ENCODE measurements at regions of chr19 and their contacts with region 1.

Region 1: DNA sequence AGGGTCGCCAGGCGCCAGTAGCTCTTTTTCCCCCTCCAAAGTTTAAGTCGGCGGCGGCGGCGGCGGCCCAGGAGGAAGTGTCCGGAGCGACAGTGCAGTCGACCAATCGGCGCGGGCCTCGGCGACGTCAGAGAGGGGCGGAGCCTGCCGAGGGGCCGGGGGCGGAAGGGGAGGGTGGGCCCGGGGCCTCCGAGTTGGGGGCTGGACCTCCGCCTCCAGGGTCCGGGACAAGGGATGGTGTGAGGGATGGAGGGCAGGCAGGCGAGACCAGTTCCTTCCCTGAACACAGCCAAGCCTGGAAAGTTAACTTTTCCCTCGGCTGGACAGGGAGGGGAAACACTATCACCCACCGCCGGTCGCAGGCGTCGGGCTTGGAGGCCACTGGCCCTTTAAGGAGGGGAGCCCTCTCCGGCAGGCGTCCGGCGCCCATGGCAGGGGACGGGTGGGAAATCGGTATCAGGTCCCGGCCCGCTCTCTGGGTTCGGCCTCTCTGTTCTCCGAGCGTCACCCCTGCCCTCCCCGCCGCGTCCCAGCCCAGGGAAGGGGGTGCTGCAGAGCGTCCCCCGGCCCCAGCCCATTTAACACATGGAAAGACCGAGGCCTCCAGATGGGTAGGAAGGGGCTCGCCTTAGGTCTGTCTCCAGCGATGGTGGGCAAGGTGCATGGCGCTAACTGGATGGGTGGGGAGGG is at the start of gene PRKD2:
- DNase-seq: peak; percentile 68 to 96 (median 80)
- ATAC-seq: peak; percentile 71
- H3K4me3 ChIP-seq: peak within 1 kb of the TSS; percentile 97
- H3K4me3 Mint-ChIP-seq: peak within 1 kb of the TSS; percentile 89 to 98 (median 95)
- H3K27ac ChIP-seq: peak within 1 kb of the TSS; percentile 98
- H3K27ac Mint-ChIP-seq: peak within 1 kb of the TSS; percentile 94 to 99 (median 97)
- H3K4me1 ChIP-seq: peaks cover 29% of the 10 kb centered on the region in 2 donors
- H3K4me1 Mint-ChIP-seq: peaks cover 30 to 57% (median 44%) of the 10 kb centered on the region in 7 donors
- H3K27me3 ChIP-seq: no peaks in the 10 kb centered on the region
- H3K27me3 Mint-ChIP-seq: no peaks in the 10 kb centered on the region
- total RNA-seq, gene PRKD2: 120 to 181 (median 123) TPM

Region 2: GRCh38 chr19:46614114-46614722 is 103.0 kb before region 1 on chr19:
- CTCF ChIA-PET with region 1: no interaction called
- POLR2A ChIA-PET with region 1: interaction called, 4 read pairs
- intact Hi-C with region 1: loop called in 1 of 2 experiments (anchors 5 kb)
- DNase-seq: peak in 8 of 9 donors; percentile 70 to 83 (median 77)
- ATAC-seq: peak; percentile 79
- H3K4me3 ChIP-seq: no peak overlapping the region
- H3K4me3 Mint-ChIP-seq: peak overlapping the region; percentile 40 to 77 (median 71)
- H3K27ac ChIP-seq: peak overlapping the region; percentile 65
- H3K27ac Mint-ChIP-seq: peak overlapping the region; percentile 79 to 93 (median 89)
- H3K4me1 ChIP-seq: peaks cover 24 to 84% of the 10 kb centered on the region in 2 donors
- H3K4me1 Mint-ChIP-seq: peaks cover 55 to 85% (median 77%) of the 10 kb centered on the region in 7 donors
- H3K27me3 ChIP-seq: no peaks in the 10 kb centered on the region
- H3K27me3 Mint-ChIP-seq: no peaks in the 10 kb centered on the region

Region 3: GRCh38 chr19:46624958-46625661 is 92.1 kb before region 1 on chr19 and contains the start of gene PTGIR:
- CTCF ChIA-PET with region 1: no interaction called
- POLR2A ChIA-PET with region 1: no interaction called
- intact Hi-C with region 1: no loop called
- DNase-seq: peak in 1 of 9 donors; percentile 64
- ATAC-seq: peak; percentile 49
- H3K4me3 ChIP-seq: peak within 1 kb of the TSS; percentile 35
- H3K4me3 Mint-ChIP-seq: peak within 1 kb of the TSS; percentile 71 to 96 (median 83)
- H3K27ac ChIP-seq: peak within 1 kb of the TSS; percentile 57
- H3K27ac Mint-ChIP-seq: peak within 1 kb of the TSS; percentile 56 to 95 (median 90)
- H3K4me1 ChIP-seq: peaks cover 0 to 48% of the 10 kb centered on the region in 2 donors
- H3K4me1 Mint-ChIP-seq: peaks cover 32 to 61% (median 51%) of the 10 kb centered on the region in 7 donors
- H3K27me3 ChIP-seq: no peaks in the 10 kb centered on the region
- H3K27me3 Mint-ChIP-seq: peaks cover 0 to 6% (median 0%) of the 10 kb centered on the region in 5 donors
- total RNA-seq, gene PTGIR: 4.2 to 99.1 (median 4.9) TPM

Region 4: GRCh38 chr19:46704379-46705076 is 12.7 kb before region 1 on chr19:
- CTCF ChIA-PET with region 1: interaction called, 22 read pairs
- POLR2A ChIA-PET with region 1: interaction called, 18 read pairs
- intact Hi-C with region 1: loop called (anchors 1 kb)
- DNase-seq: peak; percentile 69 to 93 (median 82)
- ATAC-seq: peak; percentile 98
- H3K4me3 ChIP-seq: no peak overlapping the region
- H3K4me3 Mint-ChIP-seq: peak overlapping the region in 1 of 10 donors; percentile 35
- H3K27ac ChIP-seq: no peak overlapping the region
- H3K27ac Mint-ChIP-seq: peak overlapping the region; percentile 16 to 90 (median 68)
- H3K4me1 ChIP-seq: peaks cover 0 to 4% of the 10 kb centered on the region in 2 donors
- H3K4me1 Mint-ChIP-seq: peaks cover 7 to 17% (median 12%) of the 10 kb centered on the region in 7 donors
- H3K27me3 ChIP-seq: no peaks in the 10 kb centered on the region
- H3K27me3 Mint-ChIP-seq: no peaks in the 10 kb centered on the region

Region 5: GRCh38 chr19:46746281-46747013 is 29.3 kb after region 1 on chr19 and contains the start of gene STRN4:
- CTCF ChIA-PET with region 1: interaction called, 4 read pairs
- POLR2A ChIA-PET with region 1: interaction called, 3 read pairs
- intact Hi-C with region 1: loop called (anchors 1 to 5 kb)
- DNase-seq: peak in 8 of 9 donors; percentile 29 to 65 (median 50)
- ATAC-seq: peak; percentile 87
- H3K4me3 ChIP-seq: peak within 1 kb of the TSS; percentile 73
- H3K4me3 Mint-ChIP-seq: peak within 1 kb of the TSS; percentile 84 to 97 (median 90)
- H3K27ac ChIP-seq: peak within 1 kb of the TSS; percentile 91
- H3K27ac Mint-ChIP-seq: peak within 1 kb of the TSS; percentile 74 to 94 (median 87)
- H3K4me1 ChIP-seq: peaks cover 21 to 26% of the 10 kb centered on the region in 2 donors
- H3K4me1 Mint-ChIP-seq: peaks cover 43 to 64% (median 58%) of the 10 kb centered on the region in 7 donors
- H3K27me3 ChIP-seq: no peaks in the 10 kb centered on the region
- H3K27me3 Mint-ChIP-seq: no peaks in the 10 kb centered on the region
- total RNA-seq, gene STRN4: 81.3 to 120 (median 90.4) TPM

Region 6: GRCh38 chr19:46850228-46851203 is 133.3 kb after region 1 on chr19 and contains the start of gene AP2S1:
- CTCF ChIA-PET with region 1: no interaction called
- POLR2A ChIA-PET with region 1: interaction called, 3 read pairs
- intact Hi-C with region 1: loop called in 1 of 2 experiments (anchors 1 kb)
- DNase-seq: peak; percentile 73 to 98 (median 93)
- ATAC-seq: peak; percentile 97
- H3K4me3 ChIP-seq: peak within 1 kb of the TSS; percentile 89
- H3K4me3 Mint-ChIP-seq: peak within 1 kb of the TSS; percentile 87 to 99 (median 93)
- H3K27ac ChIP-seq: peak within 1 kb of the TSS; percentile 79
- H3K27ac Mint-ChIP-seq: peak within 1 kb of the TSS; percentile 68 to 96 (median 83)
- H3K4me1 ChIP-seq: peaks cover 9 to 12% of the 10 kb centered on the region in 2 donors
- H3K4me1 Mint-ChIP-seq: peaks cover 20 to 34% (median 29%) of the 10 kb centered on the region in 7 donors
- H3K27me3 ChIP-seq: no peaks in the 10 kb centered on the region
- H3K27me3 Mint-ChIP-seq: peaks cover 0 to 3% (median 0%) of the 10 kb centered on the region in 5 donors
- total RNA-seq, gene AP2S1: 34.4 to 116 (median 46.5) TPM

Region 7: DNA sequence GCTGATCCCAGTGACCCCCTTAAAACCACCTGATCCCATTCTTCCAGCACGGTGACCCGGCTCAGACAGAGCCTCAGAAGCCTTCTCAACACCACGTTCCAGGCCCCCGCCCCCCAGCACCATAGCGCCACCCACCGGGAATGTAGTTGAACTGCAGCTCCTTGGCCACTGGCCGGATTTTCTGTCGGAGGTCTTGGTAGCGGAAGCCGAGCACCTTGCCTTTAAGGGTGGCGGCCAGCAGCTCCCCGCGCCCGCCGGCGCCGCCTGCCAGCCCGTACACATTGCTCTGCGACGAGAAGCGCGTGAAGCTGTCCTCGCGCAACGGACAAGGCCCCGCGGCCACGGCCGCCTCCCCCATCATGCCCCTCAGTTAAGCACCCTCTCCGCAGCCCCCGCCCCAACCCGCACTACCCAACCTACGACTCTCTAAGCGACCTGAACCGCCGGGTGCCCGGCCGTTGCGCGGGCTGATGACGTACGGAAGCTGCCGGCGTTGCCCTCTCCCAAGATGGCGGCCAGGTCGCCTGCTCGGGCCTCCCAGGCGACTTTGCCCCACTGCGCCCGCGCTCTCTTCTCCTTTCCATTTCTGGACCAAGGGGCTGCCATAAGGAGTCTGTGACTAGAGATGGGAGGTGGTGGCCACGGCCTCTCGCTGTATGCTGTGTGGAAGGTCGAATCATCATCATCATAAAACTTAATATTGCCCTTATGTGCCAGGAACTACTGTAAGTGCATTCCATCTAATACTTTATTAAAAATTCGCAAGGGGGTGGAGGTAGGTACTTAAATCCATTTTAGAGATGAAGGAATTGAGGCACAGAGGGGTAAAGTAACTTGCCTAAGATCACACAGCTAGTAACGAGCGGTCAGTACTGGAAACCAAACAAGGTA is 766.9 kb after region 1 on chr19 and contains the start of gene KPTN:
- CTCF ChIA-PET with region 1: no interaction called
- POLR2A ChIA-PET with region 1: no interaction called
- intact Hi-C with region 1: loop called in 1 of 2 experiments (anchors 10 kb)
- DNase-seq: peak; percentile 85 to 92 (median 88)
- ATAC-seq: peak; percentile 91
- H3K4me3 ChIP-seq: peak within 1 kb of the TSS; percentile 74
- H3K4me3 Mint-ChIP-seq: peak within 1 kb of the TSS; percentile 83 to 99 (median 96)
- H3K27ac ChIP-seq: peak within 1 kb of the TSS; percentile 96
- H3K27ac Mint-ChIP-seq: peak within 1 kb of the TSS; percentile 94 to 99 (median 97)
- H3K4me1 ChIP-seq: peaks cover 18% of the 10 kb centered on the region in 2 donors
- H3K4me1 Mint-ChIP-seq: peaks cover 22 to 39% (median 30%) of the 10 kb centered on the region in 7 donors
- H3K27me3 ChIP-seq: no peaks in the 10 kb centered on the region
- H3K27me3 Mint-ChIP-seq: peaks cover 0 to 4% (median 0%) of the 10 kb centered on the region in 5 donors
- total RNA-seq, gene KPTN: 5.1 to 9.2 (median 6.7) TPM